ENCODE measurements at regions of chr6 and their contacts with region 1.

Region 1: DNA sequence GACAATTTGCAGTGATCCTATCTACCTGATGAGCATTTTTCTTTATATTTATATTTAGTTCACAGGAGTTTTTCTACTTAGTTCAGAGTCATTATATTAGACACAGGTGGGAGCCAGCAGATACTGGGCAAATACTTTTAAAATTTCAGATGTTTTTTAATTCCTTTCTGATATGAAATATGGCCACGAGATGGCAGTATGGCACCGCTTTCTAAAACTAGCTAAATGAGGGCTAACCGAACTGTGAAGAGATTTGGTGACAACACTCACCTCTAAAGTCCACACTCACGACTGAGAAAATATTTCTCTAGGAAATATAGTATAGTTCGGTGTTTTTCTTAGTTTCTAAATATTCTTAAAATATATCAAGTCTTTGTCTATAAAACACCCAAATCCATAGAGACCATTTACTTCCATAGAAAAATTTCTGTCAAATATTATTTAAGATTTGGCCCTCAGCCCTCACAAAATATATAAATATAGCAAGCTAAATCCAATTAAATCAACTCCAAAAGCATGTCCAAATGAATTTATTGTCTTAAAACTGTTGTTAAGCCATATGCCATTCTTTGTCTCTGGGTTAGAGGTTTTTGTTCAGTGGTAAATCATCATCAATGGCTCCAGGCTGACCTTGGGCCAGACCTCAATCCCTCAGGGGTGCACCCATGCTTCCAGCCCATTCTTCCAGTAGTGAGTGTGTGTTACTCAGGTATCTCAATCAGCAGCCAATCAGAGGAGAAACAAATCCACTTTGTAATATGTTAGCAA is 63.6 kb downstream of the HUS1B start:
- DNase-seq: peak; percentile 87
- H3K4me3 Mint-ChIP-seq: no peak overlapping the region
- H3K27ac Mint-ChIP-seq: no peak overlapping the region
- H3K4me1 Mint-ChIP-seq: peaks cover 11% of the 10 kb centered on the region
- H3K27me3 Mint-ChIP-seq: no peaks in the 10 kb centered on the region

Region 2: GRCh38 chr6:620950-621349 is 27.6 kb after region 1 on chr6:
- CTCF ChIA-PET with region 1: no interaction called
- intact Hi-C with region 1: no loop called
- DNase-seq: no peak
- H3K4me3 Mint-ChIP-seq: no peak overlapping the region
- H3K27ac Mint-ChIP-seq: no peak overlapping the region
- H3K4me1 Mint-ChIP-seq: no peaks in the 10 kb centered on the region
- H3K27me3 Mint-ChIP-seq: no peaks in the 10 kb centered on the region

Region 3: GRCh38 chr6:683742-684440 is 90.6 kb after region 1 on chr6:
- CTCF ChIA-PET with region 1: interaction called, 6 read pairs
- intact Hi-C with region 1: loop called (anchors 1 kb)
- DNase-seq: no peak
- H3K4me3 Mint-ChIP-seq: peak overlapping the region; percentile 10
- H3K27ac Mint-ChIP-seq: no peak overlapping the region
- H3K4me1 Mint-ChIP-seq: peaks cover 52% of the 10 kb centered on the region
- H3K27me3 Mint-ChIP-seq: no peaks in the 10 kb centered on the region

Region 4: GRCh38 chr6:786946-787763 is 193.8 kb after region 1 on chr6:
- CTCF ChIA-PET with region 1: interaction called, 12 read pairs
- intact Hi-C with region 1: loop called (anchors 1 kb)
- DNase-seq: peak; percentile 28
- H3K4me3 Mint-ChIP-seq: no peak overlapping the region
- H3K27ac Mint-ChIP-seq: no peak overlapping the region
- H3K4me1 Mint-ChIP-seq: peaks cover 15% of the 10 kb centered on the region
- H3K27me3 Mint-ChIP-seq: peaks cover 9% of the 10 kb centered on the region

Region 5: GRCh38 chr6:1144842-1145767 is 551.8 kb after region 1 on chr6:
- CTCF ChIA-PET with region 1: no interaction called
- intact Hi-C with region 1: no loop called
- DNase-seq: no peak
- H3K4me3 Mint-ChIP-seq: no peak overlapping the region
- H3K27ac Mint-ChIP-seq: no peak overlapping the region
- H3K4me1 Mint-ChIP-seq: no peaks in the 10 kb centered on the region
- H3K27me3 Mint-ChIP-seq: peaks cover 26% of the 10 kb centered on the region

Region 6: DNA sequence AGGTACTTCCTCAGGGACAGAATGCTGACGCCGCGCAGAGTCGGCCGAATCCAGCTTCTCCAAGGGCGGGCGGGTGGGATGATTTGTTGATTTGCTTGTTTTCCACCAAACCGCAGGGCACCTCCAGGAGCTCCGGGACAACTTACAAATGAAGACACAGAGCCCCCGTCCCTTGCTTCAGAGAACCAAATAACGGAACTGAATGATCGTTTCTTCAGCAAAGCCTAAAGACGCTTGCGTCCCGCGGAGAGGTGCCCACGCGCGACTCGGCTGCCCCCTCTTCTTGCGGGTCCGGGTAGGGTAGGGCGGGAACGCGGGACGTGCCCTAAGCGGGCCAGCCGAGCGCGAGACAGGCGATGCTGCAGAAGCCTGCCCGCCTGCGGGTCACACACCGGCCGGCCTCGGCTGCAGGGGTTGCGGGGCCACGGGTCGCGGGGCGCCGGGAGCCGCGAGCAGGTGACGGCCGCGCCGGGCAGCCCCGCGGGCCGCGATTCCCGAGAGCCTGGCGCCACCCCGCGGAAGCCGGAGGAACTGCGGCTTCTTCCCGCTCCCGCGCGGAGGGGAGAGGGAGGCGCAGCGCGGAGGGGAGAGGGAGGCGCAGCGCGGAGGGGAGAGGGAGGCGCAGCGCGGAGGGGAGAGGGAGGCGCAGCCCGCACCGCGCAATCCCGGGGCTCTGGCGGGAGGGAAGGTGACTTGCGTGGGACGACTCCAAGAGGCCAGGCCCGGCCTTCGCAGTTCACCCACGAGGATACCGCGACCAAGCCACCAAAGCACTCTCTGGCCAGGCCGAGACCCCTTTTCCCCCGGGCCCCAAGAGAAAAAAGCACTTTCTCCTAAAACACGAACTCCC is 788.4 kb after region 1 on chr6:
- CTCF ChIA-PET with region 1: interaction called, 6 read pairs
- intact Hi-C with region 1: loop called (anchors 1 kb)
- DNase-seq: peak; percentile 63
- H3K4me3 Mint-ChIP-seq: no peak overlapping the region
- H3K27ac Mint-ChIP-seq: no peak overlapping the region
- H3K4me1 Mint-ChIP-seq: peaks cover 41% of the 10 kb centered on the region
- H3K27me3 Mint-ChIP-seq: peaks cover 74% of the 10 kb centered on the region

Region 7: DNA sequence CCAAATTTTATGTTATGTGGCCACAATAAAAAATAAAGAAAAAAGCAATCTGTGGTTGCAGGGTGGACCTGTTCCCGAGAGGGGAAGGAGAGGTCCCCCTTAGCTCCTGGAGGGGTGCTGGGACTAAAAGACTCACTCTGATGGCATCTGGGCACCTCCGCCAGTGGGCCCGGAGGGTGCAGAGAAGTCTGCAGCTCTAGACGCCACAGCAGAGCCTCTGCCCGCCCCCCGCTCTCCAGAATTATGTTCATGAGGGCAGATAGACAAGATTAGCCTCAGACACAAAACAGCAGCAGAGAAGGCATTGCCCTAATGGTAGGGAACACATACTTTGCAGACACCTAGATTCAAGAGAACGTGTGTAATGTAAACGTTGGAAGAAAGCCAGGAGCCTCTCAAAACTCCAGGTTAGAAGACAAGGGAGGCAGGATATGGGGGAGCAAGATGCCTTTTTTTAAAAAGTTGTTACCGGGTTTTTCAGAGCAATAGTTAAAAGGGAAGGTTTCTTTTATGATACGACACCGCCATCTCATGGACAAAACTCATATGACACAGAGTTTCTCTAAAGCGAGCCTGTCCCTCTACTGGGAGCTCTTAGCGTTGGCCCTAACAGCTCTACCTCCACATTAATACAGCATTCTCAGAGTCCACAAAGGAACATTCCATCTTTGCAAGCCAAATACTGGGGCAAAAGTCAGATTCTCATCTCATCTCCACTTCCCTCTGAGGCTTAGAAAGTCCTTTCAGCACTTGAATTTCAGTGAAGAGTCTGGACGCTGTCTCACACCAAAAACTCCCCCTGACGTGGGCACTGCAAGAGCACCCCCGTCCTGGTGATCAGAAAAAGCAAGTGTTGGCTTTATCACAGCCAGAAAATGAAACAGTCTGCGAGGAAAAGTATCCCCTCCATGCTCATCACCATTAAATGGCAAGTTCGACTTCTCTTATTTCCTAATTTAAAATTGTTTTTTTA is 843.3 kb after region 1 on chr6:
- CTCF ChIA-PET with region 1: interaction called, 5 read pairs
- intact Hi-C with region 1: loop called (anchors 1 kb)
- DNase-seq: peak; percentile 63
- H3K4me3 Mint-ChIP-seq: no peak overlapping the region
- H3K27ac Mint-ChIP-seq: no peak overlapping the region
- H3K4me1 Mint-ChIP-seq: no peaks in the 10 kb centered on the region
- H3K27me3 Mint-ChIP-seq: peaks cover 42% of the 10 kb centered on the region

Measured in activated naive CD4-positive, alpha-beta T cell treated with anti-CD3 and anti-CD28 coated beads for 36 hours (primary cell).